T-cell (primary cell): ENCODE measurements at regions of chr13 and their contacts with region 1.

Region 1: GRCh38 chr13:51371768-51372399 is 32.4 kb downstream of the SERPINE3 start:
- DNase-seq: no peak
- ATAC-seq: no peak
- H3K4me3 ChIP-seq: no peak overlapping the region
- H3K4me3 Mint-ChIP-seq: no peak overlapping the region
- H3K27ac ChIP-seq: no peak overlapping the region
- H3K27ac Mint-ChIP-seq: no peak overlapping the region
- H3K4me1 ChIP-seq: no peaks in the 10 kb centered on the region
- H3K4me1 Mint-ChIP-seq: no peaks in the 10 kb centered on the region
- H3K27me3 ChIP-seq: no peaks in the 10 kb centered on the region
- H3K27me3 Mint-ChIP-seq: no peaks in the 10 kb centered on the region

Region 2: GRCh38 chr13:51222037-51222685 is 149.7 kb before region 1 on chr13 and contains the start of gene FAM124A:
- CTCF ChIA-PET with region 1: no interaction called
- POLR2A ChIA-PET with region 1: no interaction called
- DNase-seq: peak in 16 of 35 experiments; percentile 1 to 42 (median 15)
- ATAC-seq: peak; percentile 77 to 87 (median 78)
- H3K4me3 ChIP-seq: peak within 1 kb of the TSS; percentile 38 to 70
- H3K4me3 Mint-ChIP-seq: peak within 1 kb of the TSS; percentile 71 to 77 (median 74)
- H3K27ac ChIP-seq: no peak within 1 kb of the TSS
- H3K27ac Mint-ChIP-seq: no peak within 1 kb of the TSS
- H3K4me1 ChIP-seq: peaks cover 0 to 10% of the 10 kb centered on the region in 2 experiments
- H3K4me1 Mint-ChIP-seq: peaks cover 0 to 10% (median 6%) of the 10 kb centered on the region in 3 donors
- H3K27me3 ChIP-seq: peaks cover 11 to 51% of the 10 kb centered on the region in 2 experiments
- H3K27me3 Mint-ChIP-seq: peaks cover 43 to 51% of the 10 kb centered on the region in 2 donors
- total RNA-seq, gene FAM124A: 0.09 TPM in 1 of 5 donors, not detected in the others

Region 3: DNA sequence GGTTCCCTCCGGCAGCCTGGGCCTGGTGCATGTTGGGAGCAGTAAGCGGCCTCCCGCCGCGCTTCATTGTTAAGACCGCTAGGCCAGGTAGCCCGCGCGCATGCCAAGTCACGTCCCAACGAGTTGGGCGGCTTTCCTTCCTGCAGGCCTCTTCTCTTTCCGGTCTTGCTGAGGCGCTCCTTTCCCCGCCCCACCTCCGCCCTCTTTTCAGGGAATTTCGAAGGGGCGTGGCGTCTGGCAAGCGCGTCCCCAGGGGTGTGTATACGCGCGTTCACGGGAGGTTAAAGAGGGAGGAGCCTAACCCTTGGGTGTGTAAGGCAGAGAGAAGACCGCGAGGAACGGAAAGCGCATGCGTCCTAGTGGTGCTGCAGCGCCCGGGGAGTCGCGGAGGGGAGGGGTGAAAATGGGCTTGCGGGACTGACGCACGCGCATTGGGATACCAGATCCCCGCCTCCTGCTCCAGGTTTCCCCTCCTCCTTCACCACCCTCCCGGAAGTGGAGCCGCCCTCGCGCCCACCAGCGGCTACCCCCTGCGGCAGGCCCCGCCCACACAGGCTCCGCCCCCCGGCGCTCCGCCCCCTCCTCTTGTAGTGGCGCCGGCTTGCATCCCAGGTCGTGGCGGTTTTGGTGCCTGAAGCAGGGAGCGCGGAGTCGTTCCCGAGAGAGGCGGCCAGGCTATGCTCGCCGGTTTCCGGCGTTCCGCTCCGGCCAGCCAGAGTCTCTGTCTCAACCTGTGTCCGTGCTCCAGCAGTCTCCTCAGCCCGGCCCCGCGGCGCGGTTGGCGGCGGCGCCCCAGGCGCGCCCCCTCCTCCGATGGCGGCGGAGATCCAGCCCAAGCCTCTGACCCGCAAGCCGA is 212.2 kb after region 1 on chr13 and contains the start of gene WDFY2:
- CTCF ChIA-PET with region 1: no interaction called
- POLR2A ChIA-PET with region 1: interaction called in 1 of 2 experiments, 10 read pairs
- DNase-seq: peak; percentile 97 to 100 (median 98)
- ATAC-seq: peak; percentile 79 to 88 (median 82)
- H3K4me3 ChIP-seq: peak within 1 kb of the TSS; percentile 73 to 91
- H3K4me3 Mint-ChIP-seq: peak within 1 kb of the TSS; percentile 83 to 100 (median 97)
- H3K27ac ChIP-seq: peak within 1 kb of the TSS; percentile 85
- H3K27ac Mint-ChIP-seq: peak within 1 kb of the TSS; percentile 99
- H3K4me1 ChIP-seq: peaks cover 10 to 12% of the 10 kb centered on the region in 2 experiments
- H3K4me1 Mint-ChIP-seq: peaks cover 26 to 44% (median 37%) of the 10 kb centered on the region in 3 donors
- H3K27me3 ChIP-seq: no peaks in the 10 kb centered on the region
- H3K27me3 Mint-ChIP-seq: no peaks in the 10 kb centered on the region
- total RNA-seq, gene WDFY2: 18.2 to 28.3 (median 20.0) TPM